ENCODE measurements at regions of chr1 and their contacts with region 1.

Region 1: GRCh38 chr1:247435030-247435758 is 19.2 kb downstream of the NLRP3 start:
- DNase-seq: peak in 1 of 14 experiments; percentile 48
- ATAC-seq: no peak
- H3K4me3 ChIP-seq: no peak overlapping the region
- H3K4me3 Mint-ChIP-seq: no peak overlapping the region
- H3K27ac ChIP-seq: no peak overlapping the region
- H3K27ac Mint-ChIP-seq: no peak overlapping the region
- H3K4me1 ChIP-seq: no peaks in the 10 kb centered on the region
- H3K4me1 Mint-ChIP-seq: no peaks in the 10 kb centered on the region
- H3K27me3 ChIP-seq: no peaks in the 10 kb centered on the region
- H3K27me3 Mint-ChIP-seq: no peaks in the 10 kb centered on the region
- CTCF ChIP-seq: no peak

Region 2: DNA sequence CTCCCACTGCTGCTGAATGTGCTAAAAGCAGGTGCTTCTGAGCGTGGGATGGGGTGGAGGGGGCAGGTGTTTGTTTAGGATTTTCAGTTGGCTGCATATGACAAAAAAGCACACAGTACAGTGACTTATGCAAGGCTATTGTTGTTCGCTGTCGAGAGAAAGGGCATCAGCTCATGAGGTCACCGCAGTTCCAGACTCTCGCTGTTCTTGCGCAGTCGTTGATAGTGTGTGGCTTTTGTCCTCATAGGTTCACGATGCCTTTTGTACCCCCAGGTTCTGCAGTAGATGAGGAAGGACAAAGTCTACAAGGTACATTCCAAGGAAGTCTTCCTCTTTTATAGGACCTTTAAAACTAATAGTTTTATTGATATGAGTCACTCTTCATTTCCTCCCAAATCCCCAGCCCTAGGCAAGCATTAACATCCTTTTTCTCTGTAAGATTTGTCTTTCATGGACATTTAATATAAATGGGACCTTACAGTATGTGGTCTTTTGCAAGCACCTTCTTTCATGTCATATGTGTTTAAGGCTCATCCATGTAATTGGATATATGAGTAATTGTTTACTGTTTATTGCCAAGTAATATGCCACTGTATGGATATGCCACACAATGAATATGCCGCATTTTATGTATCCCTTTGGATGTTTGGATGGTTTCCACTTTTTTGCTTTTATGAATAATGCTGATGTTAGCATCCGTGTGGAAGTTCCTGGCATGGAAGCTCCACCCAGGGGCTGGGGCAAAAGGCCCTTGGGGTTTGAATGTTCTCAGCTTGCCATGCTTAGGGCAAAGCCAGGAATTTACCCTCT is 33.7 kb before region 1 on chr1:
- CTCF ChIA-PET with region 1: no interaction called
- POLR2A ChIA-PET with region 1: no interaction called
- intact Hi-C with region 1: loop called in 1 of 2 experiments (anchors 5 kb)
- DNase-seq: no peak
- ATAC-seq: no peak
- H3K4me3 ChIP-seq: no peak overlapping the region
- H3K4me3 Mint-ChIP-seq: no peak overlapping the region
- H3K27ac ChIP-seq: no peak overlapping the region
- H3K27ac Mint-ChIP-seq: no peak overlapping the region
- H3K4me1 ChIP-seq: peaks cover 9% of the 10 kb centered on the region
- H3K4me1 Mint-ChIP-seq: peaks cover 4% of the 10 kb centered on the region
- H3K27me3 ChIP-seq: no peaks in the 10 kb centered on the region
- H3K27me3 Mint-ChIP-seq: no peaks in the 10 kb centered on the region
- CTCF ChIP-seq: no peak

Region 3: DNA sequence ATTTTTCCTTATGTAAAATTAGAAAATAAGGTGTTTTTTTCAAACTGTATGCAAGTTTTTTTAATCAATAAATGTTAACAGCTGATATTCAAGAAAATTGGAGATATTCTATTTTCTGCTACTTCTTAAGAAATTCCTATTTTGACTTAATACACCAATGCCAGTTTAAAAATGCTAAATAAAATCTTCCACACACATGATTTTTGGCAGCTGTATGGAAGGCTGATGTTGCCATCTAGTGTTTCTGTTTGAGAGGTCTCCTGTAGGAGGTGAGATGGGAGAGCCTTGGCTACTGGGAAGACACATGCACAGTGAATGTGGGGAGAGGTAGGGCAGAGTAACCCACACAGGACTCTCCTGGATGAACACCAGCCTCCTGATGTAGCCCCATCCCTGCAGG is 51.9 kb after region 1 on chr1:
- CTCF ChIA-PET with region 1: no interaction called
- POLR2A ChIA-PET with region 1: no interaction called
- intact Hi-C with region 1: no loop called
- DNase-seq: peak in 10 of 14 experiments; percentile 2 to 76 (median 14)
- ATAC-seq: peak; percentile 77
- H3K4me3 ChIP-seq: no peak overlapping the region
- H3K4me3 Mint-ChIP-seq: no peak overlapping the region
- H3K27ac ChIP-seq: no peak overlapping the region
- H3K27ac Mint-ChIP-seq: no peak overlapping the region
- H3K4me1 ChIP-seq: no peaks in the 10 kb centered on the region
- H3K4me1 Mint-ChIP-seq: no peaks in the 10 kb centered on the region
- H3K27me3 ChIP-seq: peaks cover 0 to 5% of the 10 kb centered on the region in 2 experiments
- H3K27me3 Mint-ChIP-seq: peaks cover 10% of the 10 kb centered on the region
- CTCF ChIP-seq: peak; percentile 76

Region 4: GRCh38 chr1:247548092-247548491 is 112.9 kb after region 1 on chr1:
- CTCF ChIA-PET with region 1: no interaction called
- POLR2A ChIA-PET with region 1: no interaction called
- intact Hi-C with region 1: no loop called
- DNase-seq: no peak
- ATAC-seq: no peak
- H3K4me3 ChIP-seq: no peak overlapping the region
- H3K4me3 Mint-ChIP-seq: no peak overlapping the region
- H3K27ac ChIP-seq: no peak overlapping the region
- H3K27ac Mint-ChIP-seq: no peak overlapping the region
- H3K4me1 ChIP-seq: no peaks in the 10 kb centered on the region
- H3K4me1 Mint-ChIP-seq: peaks cover 11% of the 10 kb centered on the region
- H3K27me3 ChIP-seq: peaks cover 0 to 4% of the 10 kb centered on the region in 2 experiments
- H3K27me3 Mint-ChIP-seq: peaks cover 22% of the 10 kb centered on the region
- CTCF ChIP-seq: no peak

Measured in CD4-positive, alpha-beta T cell (primary cell).